Activated CD4-positive, alpha-beta memory T cell treated with anti-CD3 and anti-CD28 coated beads, Interleukin-2, amount 10 ng/mL, durations not matched to agents 7 days and 5 days (primary cell): ENCODE measurements at regions of chr1 and their contacts with region 1.

Region 1: DNA sequence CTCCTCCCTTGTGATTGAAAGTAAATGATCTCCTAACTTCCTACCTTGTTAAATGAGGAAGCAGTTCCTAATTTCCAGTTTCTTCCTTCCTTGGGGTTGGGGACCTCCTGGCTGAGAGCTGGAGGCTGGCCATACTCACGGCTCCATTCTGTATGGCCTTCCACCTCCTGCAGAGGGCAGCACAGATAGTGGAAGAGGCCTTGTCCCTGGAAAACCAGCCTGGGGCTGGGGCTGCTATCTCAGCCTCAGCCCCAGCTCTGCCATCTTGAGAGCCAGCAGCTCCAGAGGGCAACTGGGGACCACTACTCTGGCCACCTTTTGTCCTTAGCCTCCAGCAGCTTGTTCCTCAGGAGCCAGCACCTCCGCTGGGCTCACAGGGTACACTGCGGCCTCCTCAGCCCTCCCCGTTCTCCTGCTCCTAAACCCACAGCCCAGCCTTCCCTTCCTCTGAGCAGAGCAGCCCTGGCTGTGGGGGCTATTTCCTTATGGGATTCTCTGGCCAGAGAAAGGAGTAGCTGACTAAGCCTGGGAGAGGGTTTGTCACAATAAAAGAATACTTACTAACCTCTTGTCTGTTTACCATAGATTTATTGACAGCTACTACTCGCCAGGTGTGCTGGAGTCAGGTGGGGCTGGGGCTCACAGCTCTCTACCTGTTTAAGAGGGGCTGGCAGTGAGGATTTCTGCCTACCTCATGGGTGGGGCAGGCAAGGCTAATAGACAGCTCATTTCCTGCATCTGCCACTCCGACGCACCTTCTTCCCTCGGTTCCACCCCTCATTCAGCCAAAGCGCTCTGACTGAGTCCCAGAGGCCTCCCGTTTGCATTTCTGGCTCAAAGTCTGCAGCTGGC is 6.3 kb downstream of the TMEM234 start:
- DNase-seq: peak; percentile 71
- H3K4me3 Mint-ChIP-seq: no peak overlapping the region
- H3K27ac Mint-ChIP-seq: peak overlapping the region; percentile 72
- H3K4me1 Mint-ChIP-seq: peaks cover 24% of the 10 kb centered on the region
- H3K27me3 Mint-ChIP-seq: no peaks in the 10 kb centered on the region

Region 2: GRCh38 chr1:31872658-31873636 is 342.9 kb before region 1 on chr1:
- CTCF ChIA-PET with region 1: no interaction called
- POLR2A ChIA-PET with region 1: no interaction called
- DNase-seq: no peak
- H3K4me3 Mint-ChIP-seq: no peak overlapping the region
- H3K27ac Mint-ChIP-seq: peak overlapping the region; percentile 76
- H3K4me1 Mint-ChIP-seq: peaks cover 12% of the 10 kb centered on the region
- H3K27me3 Mint-ChIP-seq: peaks cover 2% of the 10 kb centered on the region

Region 3: GRCh38 chr1:32179443-32180185 is 36.2 kb before region 1 on chr1 and contains the start of gene TXLNA:
- CTCF ChIA-PET with region 1: interaction called, 15 read pairs
- POLR2A ChIA-PET with region 1: no interaction called
- DNase-seq: peak; percentile 92
- H3K4me3 Mint-ChIP-seq: peak within 1 kb of the TSS; percentile 88
- H3K27ac Mint-ChIP-seq: peak within 1 kb of the TSS; percentile 96
- H3K4me1 Mint-ChIP-seq: peaks cover 43% of the 10 kb centered on the region
- H3K27me3 Mint-ChIP-seq: no peaks in the 10 kb centered on the region
- total RNA-seq, gene TXLNA: 79.8 to 81.2 TPM

Region 4: GRCh38 chr1:32205401-32206370 is 10.2 kb before region 1 on chr1 and contains the start of gene IQCC:
- CTCF ChIA-PET with region 1: interaction called, 39 read pairs
- POLR2A ChIA-PET with region 1: interaction called, 10 read pairs
- DNase-seq: peak; percentile 87
- H3K4me3 Mint-ChIP-seq: peak within 1 kb of the TSS; percentile 81
- H3K27ac Mint-ChIP-seq: peak within 1 kb of the TSS; percentile 60
- H3K4me1 Mint-ChIP-seq: peaks cover 45% of the 10 kb centered on the region
- H3K27me3 Mint-ChIP-seq: no peaks in the 10 kb centered on the region
- total RNA-seq, gene IQCC: 3.7 to 3.8 TPM

Region 5: DNA sequence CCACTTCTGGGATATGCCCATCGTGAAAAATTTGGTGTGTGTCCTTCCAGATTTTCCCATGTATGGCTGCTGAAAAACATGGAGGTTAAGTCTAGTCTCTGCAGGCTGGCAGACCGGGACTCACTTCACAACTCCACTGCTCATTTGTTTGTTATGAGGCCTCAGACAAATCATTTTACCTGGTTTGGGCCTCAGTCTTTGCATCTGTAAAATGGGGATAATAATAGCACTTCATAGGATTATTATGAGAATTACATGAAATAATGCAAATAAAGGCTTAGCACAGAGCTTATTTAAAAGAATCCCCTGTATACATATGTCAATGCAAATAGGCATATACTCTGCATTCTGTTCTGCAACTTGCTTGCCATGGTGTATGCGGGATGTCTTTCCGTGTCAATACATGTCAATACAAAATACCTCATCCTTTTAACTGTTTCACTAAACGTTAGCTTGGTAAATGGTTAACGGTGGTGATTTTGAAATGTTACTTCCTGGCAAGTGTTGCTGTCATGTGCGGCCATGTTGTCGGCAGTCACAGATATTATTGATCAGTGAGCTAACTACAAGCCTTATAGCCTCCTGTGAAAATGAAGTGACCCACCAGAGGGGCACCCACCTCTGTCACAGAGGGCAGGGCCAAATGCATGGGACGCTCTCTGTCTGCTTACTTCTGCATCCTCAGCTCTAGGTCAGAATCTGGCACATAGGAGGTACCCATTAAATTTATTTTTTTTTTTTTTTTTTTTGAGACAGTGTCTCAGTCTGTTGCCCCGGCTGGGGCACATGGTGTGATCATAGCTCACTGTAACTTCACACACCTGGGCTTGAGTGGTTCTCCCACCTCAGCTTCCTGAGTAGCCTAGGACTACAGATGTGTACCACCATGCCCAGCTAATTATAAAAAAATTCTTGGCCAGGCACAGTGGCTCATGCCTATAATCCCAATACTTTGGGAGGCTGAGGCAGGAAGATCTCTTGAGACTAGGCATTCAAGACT is 39.5 kb after region 1 on chr1:
- CTCF ChIA-PET with region 1: interaction called, 25 read pairs
- POLR2A ChIA-PET with region 1: interaction called, 38 read pairs
- DNase-seq: peak; percentile 55
- H3K4me3 Mint-ChIP-seq: peak overlapping the region; percentile 98
- H3K27ac Mint-ChIP-seq: peak overlapping the region; percentile 93
- H3K4me1 Mint-ChIP-seq: peaks cover 45% of the 10 kb centered on the region
- H3K27me3 Mint-ChIP-seq: no peaks in the 10 kb centered on the region

Region 6: GRCh38 chr1:32372149-32372756 is 156.4 kb after region 1 on chr1:
- CTCF ChIA-PET with region 1: interaction called, 36 read pairs
- POLR2A ChIA-PET with region 1: interaction called, 5 read pairs
- DNase-seq: peak; percentile 74
- H3K4me3 Mint-ChIP-seq: no peak overlapping the region
- H3K27ac Mint-ChIP-seq: peak overlapping the region; percentile 33
- H3K4me1 Mint-ChIP-seq: peaks cover 18% of the 10 kb centered on the region
- H3K27me3 Mint-ChIP-seq: no peaks in the 10 kb centered on the region

Region 7: DNA sequence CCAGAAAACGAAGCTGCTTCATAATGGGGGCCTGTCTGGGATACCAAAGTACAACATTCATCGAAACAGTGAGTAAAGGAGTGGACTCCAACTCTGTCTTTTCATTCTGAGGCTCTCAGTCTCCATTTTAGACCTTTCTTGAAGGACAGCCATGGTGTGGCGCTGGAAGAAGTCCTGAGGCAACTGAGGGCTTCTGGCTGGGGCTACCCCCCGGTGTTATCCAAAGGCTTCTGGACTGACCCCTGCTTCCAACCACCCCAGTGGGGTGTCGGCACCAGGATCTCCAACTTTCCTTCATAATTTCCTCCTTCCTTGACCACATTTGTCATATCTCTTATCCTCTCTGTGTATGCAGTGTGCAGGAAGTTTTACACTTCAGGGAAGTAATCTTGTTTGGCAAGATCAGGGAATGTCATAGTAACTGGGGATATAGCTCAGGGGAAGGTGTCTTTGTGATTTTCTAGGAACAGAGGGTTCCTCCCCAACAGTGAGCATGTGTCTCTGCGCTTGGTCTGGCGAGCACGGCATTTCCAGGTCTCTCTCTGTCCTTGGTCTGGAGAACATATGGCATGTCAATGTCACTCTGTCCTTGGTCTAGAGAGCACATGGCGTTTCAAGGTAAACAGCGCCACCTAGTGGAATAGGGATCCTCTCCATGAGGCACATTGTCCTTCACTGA is 197.8 kb after region 1 on chr1:
- CTCF ChIA-PET with region 1: interaction called, 18 read pairs
- POLR2A ChIA-PET with region 1: no interaction called
- DNase-seq: peak; percentile 77
- H3K4me3 Mint-ChIP-seq: no peak overlapping the region
- H3K27ac Mint-ChIP-seq: no peak overlapping the region
- H3K4me1 Mint-ChIP-seq: peaks cover 3% of the 10 kb centered on the region
- H3K27me3 Mint-ChIP-seq: peaks cover 25% of the 10 kb centered on the region